ENCODE measurements at regions of chr6 and their contacts with region 1.

Region 1: GRCh38 chr6:41787219-41787917 is at the start of gene TOMM6:
- DNase-seq: peak; percentile 88
- ATAC-seq: peak; percentile 82
- H3K4me3 ChIP-seq: peak within 1 kb of the TSS; percentile 67 to 98
- H3K27ac ChIP-seq: peak within 1 kb of the TSS; percentile 84
- H3K4me1 ChIP-seq: peaks cover 5 to 16% of the 10 kb centered on the region in 2 experiments; a peak in 2 of 4 replicates
- H3K27me3 ChIP-seq: no peaks in the 10 kb centered on the region
- CTCF ChIP-seq: peak in 2 of 3 experiments; percentile 67 to 80; a peak in 4 of 6 replicates
- POLR2A ChIP-seq: peak; percentile 92
- RAD21 ChIP-seq: no peak
- total RNA-seq, gene TOMM6: 292 TPM

Region 2: GRCh38 chr6:41449399-41450245 is 337.7 kb before region 1 on chr6:
- CTCF ChIA-PET with region 1: no interaction called
- POLR2A ChIA-PET with region 1: no interaction called
- RAD21 ChIA-PET with region 1: no interaction called
- intact Hi-C with region 1: no loop called
- DNase-seq: no peak
- ATAC-seq: 0 out of 2 replicates have a peak, but pooled peaks have one; percentile 29
- H3K4me3 ChIP-seq: no peak overlapping the region
- H3K27ac ChIP-seq: no peak overlapping the region
- H3K4me1 ChIP-seq: peaks cover 8 to 10% of the 10 kb centered on the region in 2 experiments; a peak in 3 of 4 replicates
- H3K27me3 ChIP-seq: no peaks in the 10 kb centered on the region
- CTCF ChIP-seq: no peak
- POLR2A ChIP-seq: no peak
- RAD21 ChIP-seq: no peak

Region 3: DNA sequence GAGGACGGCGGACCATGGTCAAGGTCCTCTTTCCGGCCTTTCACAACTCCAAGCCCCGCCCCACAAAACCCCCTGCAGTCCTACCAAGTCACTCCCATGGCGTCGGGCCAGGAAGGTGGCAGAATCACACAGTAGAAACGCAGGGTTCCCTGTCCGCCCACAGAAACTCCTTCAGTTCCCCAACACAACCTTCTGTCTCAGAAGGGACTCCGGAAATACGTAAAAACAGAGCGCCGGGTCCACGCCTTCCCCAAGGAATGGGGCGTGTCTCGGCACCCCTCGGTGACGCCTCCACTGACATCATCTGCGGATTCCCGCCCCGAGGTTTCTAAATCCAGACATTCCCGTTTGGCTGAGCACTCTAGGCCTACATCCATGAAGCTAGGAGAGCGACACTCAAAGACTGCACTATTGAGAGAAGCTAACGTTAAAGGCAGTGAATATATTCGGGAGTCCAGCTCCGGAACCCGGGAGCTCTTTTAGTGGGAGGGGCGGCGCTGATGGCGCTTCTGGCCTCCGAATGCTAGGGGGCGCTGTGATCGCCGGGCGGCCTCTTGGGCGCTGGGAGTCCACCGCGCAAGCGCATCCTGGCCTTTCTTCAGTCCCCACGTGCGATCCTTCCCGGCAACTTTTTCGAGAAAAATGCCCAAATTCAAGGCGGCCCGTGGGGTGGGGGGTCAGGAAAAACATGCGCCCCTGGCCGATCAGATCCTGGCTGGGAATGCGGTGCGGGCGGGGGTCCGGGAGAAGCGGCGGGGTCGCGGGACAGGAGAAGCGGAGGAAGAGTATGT is 133.7 kb after region 1 on chr6 and contains the starts of genes BYSL and MED20:
- CTCF ChIA-PET with region 1: interaction called, 22 read pairs
- POLR2A ChIA-PET with region 1: interaction called, 5 read pairs
- RAD21 ChIA-PET with region 1: interaction called in 1 of 2 experiments, 3 read pairs
- intact Hi-C with region 1: loop called (anchors 1 kb)
- DNase-seq: peak; percentile 95
- ATAC-seq: peak; percentile 84
- H3K4me3 ChIP-seq: peak within 1 kb of the TSS; percentile 73 to 82
- H3K27ac ChIP-seq: peak within 1 kb of the TSS; percentile 80
- H3K4me1 ChIP-seq: peaks cover 22 to 42% of the 10 kb centered on the region in 2 experiments
- H3K27me3 ChIP-seq: no peaks in the 10 kb centered on the region
- CTCF ChIP-seq: peak; percentile 71 to 94 (median 89)
- POLR2A ChIP-seq: peak; percentile 76
- RAD21 ChIP-seq: no peak; the same call in 1 of the 2 replicates
- total RNA-seq, gene BYSL: 55.7 TPM
- total RNA-seq, gene MED20: 26.4 TPM

Region 4: GRCh38 chr6:42043787-42044475 is 256.6 kb after region 1 on chr6:
- CTCF ChIA-PET with region 1: interaction called, 31 read pairs
- POLR2A ChIA-PET with region 1: interaction called, 10 read pairs
- RAD21 ChIA-PET with region 1: interaction called in 1 of 2 experiments, 5 read pairs
- intact Hi-C with region 1: no loop called
- DNase-seq: peak; percentile 62
- ATAC-seq: peak; percentile 87
- H3K4me3 ChIP-seq: no peak overlapping the region
- H3K27ac ChIP-seq: no peak overlapping the region
- H3K4me1 ChIP-seq: peaks cover 29 to 41% of the 10 kb centered on the region in 2 experiments
- H3K27me3 ChIP-seq: no peaks in the 10 kb centered on the region
- CTCF ChIP-seq: peak in 2 of 3 experiments; percentile 96; a peak in 4 of 6 replicates
- POLR2A ChIP-seq: no peak
- RAD21 ChIP-seq: no peak

Region 5: GRCh38 chr6:42166444-42167141 is 379.2 kb after region 1 on chr6:
- CTCF ChIA-PET with region 1: no interaction called
- POLR2A ChIA-PET with region 1: no interaction called
- RAD21 ChIA-PET with region 1: no interaction called
- intact Hi-C with region 1: loop called (anchors 10 kb)
- DNase-seq: peak; percentile 63
- ATAC-seq: peak; percentile 93
- H3K4me3 ChIP-seq: no peak overlapping the region
- H3K27ac ChIP-seq: peak overlapping the region; percentile 31; the same call in 1 of the 2 replicates
- H3K4me1 ChIP-seq: peaks cover 3 to 13% of the 10 kb centered on the region in 2 experiments; a peak in 3 of 4 replicates
- H3K27me3 ChIP-seq: no peaks in the 10 kb centered on the region
- CTCF ChIP-seq: peak; percentile 90 to 98 (median 98)
- POLR2A ChIP-seq: no peak
- RAD21 ChIP-seq: peak; percentile 94

Measured in HCT116 (cell line).